GM13976 (cell line): ENCODE measurements at regions of chrX and their contacts with region 1.

Region 1: DNA sequence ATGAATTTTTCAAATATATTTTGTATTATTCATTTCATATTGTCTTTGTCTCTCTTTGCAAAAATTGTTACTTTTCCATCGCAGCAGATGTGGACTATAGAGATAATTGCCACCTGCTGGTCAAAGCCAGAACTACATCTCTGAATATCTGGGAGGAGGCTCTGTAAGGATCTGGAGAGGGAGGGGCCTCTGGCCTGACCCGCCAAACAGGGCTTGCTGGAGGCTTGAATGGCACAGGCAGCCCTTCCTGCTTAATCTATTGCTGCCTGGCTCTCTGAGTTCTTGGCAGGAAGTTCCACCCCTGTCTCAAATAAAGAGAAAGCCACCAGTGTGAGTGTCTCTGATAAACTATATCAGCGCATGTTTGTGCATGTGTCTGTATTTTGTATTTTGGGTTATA is 132.4 kb downstream of the ZMAT1 start:
- DNase-seq: peak; percentile 49
- CTCF ChIP-seq: peak; percentile 39

Region 2: DNA sequence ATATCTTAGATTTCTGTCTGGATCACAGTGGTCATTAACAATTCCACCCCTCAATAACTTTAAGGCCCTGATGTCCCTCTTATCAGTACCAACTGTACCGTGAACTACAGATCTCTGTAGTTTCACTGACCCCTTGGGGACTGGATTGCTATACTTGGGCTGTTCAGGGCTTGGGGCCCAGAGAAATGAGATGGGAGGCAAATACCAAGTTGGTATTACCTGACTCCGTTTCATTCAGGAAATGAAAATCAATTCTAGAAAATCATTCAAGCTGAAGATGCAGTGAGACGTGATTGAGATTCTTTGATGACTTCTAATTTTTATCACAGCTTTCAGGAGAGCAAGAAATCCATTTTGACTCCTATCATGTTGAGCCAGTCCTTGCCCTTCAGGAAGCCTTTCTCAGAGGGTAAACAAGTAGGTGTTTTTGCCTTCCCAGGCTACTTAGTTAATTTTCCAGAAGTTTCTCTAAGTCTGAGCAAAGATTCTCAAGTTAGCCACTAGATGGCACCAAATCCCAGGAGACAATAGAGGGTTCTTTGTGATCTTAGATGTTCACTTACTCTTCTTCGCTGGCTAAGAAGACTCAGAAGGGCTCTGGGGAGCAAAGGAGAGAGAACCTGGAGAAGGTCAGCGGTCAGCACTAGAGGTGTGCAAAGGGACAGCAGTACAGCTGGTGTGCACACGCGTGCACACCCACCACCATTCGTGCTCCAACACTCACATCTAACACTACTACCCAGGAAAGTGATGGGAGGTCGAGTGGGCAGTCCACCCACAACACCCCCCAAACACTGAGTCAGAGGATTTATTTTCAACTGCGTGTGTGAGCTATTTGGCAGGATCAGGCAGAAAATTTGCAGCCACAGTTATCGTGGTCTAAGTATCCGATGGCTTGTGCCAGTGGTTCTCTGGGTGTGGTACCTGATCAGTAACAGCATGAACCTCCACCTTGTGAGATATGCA is 383.9 kb before region 1 on chrX:
- in situ Hi-C with region 1: loop called (anchors 10 kb)
- DNase-seq: peak; percentile 65
- CTCF ChIP-seq: peak; percentile 45

Region 3: GRCh38 chrX:101906136-101906796 is 106.9 kb after region 1 on chrX:
- in situ Hi-C with region 1: loop called (anchors 25 kb)
- DNase-seq: no peak
- CTCF ChIP-seq: no peak

Region 4: DNA sequence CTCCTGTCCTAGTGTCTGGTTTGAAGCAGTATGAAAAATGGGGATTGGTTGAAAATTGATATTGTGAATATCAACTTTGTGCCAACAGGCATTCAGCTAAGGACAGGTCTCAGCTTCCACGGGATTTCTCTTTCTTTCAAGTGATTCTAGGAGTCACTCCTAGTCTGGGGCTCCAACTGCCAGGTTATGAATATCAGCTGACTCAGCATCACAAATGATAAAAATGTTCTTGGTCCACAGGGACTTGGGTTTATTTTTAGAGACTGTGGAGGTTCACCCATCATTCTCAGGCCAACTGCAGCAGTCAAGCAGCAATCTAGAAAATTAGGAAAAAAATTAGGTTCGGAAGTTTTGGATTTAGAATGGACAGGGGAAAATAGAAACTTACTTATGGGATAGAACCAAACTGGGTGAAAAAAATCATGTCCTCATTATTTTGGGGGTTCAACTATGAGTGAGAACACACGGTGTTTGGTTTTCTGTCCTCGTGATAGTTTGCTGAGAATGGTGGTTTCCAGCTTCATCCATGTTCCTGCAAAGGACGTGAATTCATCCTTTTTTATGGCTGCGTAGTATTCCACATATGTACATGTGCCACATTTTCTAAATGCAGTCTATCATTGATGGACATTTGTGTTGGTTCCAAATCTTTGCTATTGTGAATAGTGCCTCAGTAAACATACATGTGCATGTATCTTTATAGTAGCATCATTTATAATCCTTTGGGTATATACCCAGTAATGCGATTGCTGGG is 386.8 kb after region 1 on chrX:
- in situ Hi-C with region 1: no loop called
- DNase-seq: no peak
- CTCF ChIP-seq: no peak